ENCODE measurements at regions of chr19 and their contacts with region 1.

Region 1: DNA sequence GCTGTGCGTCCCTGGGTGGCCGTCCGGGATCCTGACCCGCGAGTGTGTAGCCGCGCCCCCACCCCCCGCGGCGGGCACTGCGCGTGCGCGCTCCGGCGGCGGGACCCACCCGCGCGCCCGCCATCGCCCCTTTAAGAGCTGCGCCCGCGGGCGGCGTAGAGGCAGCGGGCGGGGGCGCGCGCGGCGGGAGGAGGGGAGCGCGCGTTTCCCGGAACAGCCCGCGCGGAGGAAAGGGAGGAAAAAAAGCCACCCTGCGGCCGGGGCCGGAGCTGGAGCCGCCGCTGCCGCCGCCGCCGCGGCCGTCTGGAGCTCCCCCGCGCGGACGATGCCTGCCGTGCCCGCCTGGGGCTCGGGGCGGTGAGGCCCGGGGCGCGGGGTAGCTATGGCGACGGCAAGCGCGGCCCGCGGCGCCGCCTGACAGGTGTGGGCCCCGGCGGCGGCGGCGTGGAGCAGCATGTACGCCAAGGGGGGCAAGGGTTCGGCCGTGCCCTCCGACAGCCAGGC is at the start of gene SSBP4:
- DNase-seq: peak; percentile 53 to 89 (median 72)
- ATAC-seq: peak; percentile 59
- H3K4me3 ChIP-seq: peak within 1 kb of the TSS; percentile 61
- H3K4me3 Mint-ChIP-seq: peak within 1 kb of the TSS; percentile 80 to 92 (median 85)
- H3K27ac ChIP-seq: peak within 1 kb of the TSS; percentile 63
- H3K27ac Mint-ChIP-seq: peak within 1 kb of the TSS; percentile 40 to 90 (median 67)
- H3K4me1 ChIP-seq: peaks cover 68 to 76% of the 10 kb centered on the region in 2 donors
- H3K4me1 Mint-ChIP-seq: peaks cover 40 to 84% (median 79%) of the 10 kb centered on the region in 7 donors
- H3K27me3 ChIP-seq: peaks cover 0 to 14% of the 10 kb centered on the region in 2 donors
- H3K27me3 Mint-ChIP-seq: peaks cover 8 to 27% (median 15%) of the 10 kb centered on the region in 5 donors
- total RNA-seq, gene SSBP4: 27.0 to 185 (median 40.7) TPM

Region 2: DNA sequence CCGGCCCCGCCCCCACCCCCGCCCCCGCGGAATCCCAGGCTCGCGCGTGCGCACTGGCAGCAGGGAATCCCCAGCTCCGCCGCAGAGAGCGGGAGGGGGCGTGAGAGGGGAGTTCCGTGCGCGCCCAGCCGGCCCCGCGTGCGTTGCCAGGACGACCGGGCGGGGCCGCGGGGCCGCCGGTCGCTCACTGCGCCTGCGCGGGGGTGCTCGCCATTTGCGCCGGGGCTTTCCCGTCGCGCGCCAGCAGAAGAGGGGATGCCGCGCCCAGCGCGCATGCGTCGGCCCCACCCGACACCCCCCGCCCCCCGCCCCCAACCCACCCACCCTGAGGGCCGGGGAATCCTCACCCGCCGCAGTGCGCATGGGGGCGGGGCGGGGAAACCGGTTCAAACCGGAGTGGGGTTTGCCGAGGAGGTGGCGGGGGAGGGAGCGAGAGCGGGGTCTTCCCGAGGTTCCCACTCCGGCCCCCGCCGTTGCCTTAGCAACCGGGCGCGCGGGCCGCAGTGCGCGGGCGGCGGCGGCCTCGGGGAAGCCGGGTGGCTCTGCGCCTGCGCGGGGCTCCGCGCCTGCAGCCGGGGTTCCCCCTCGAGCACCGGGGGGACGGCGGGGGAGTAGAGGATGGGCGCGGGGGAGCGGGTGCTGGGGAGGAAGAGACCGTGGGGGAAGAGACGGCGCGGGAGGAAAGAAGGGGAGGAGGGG is 471.3 kb before region 1 on chr19:
- CTCF ChIA-PET with region 1: interaction called, 3 read pairs
- POLR2A ChIA-PET with region 1: no interaction called
- intact Hi-C with region 1: loop called in 1 of 2 experiments (anchors 10 kb)
- DNase-seq: peak; percentile 91 to 99 (median 95)
- ATAC-seq: peak; percentile 87
- H3K4me3 ChIP-seq: peak overlapping the region; percentile 41
- H3K4me3 Mint-ChIP-seq: peak overlapping the region; percentile 68 to 88 (median 82)
- H3K27ac ChIP-seq: peak overlapping the region; percentile 99
- H3K27ac Mint-ChIP-seq: peak overlapping the region in 7 of 9 donors; percentile 48 to 96 (median 87)
- H3K4me1 ChIP-seq: peaks cover 37 to 50% of the 10 kb centered on the region in 2 donors
- H3K4me1 Mint-ChIP-seq: peaks cover 22 to 55% (median 43%) of the 10 kb centered on the region in 7 donors
- H3K27me3 ChIP-seq: peaks cover 18 to 28% of the 10 kb centered on the region in 2 donors
- H3K27me3 Mint-ChIP-seq: peaks cover 27 to 43% (median 30%) of the 10 kb centered on the region in 5 donors

Region 3: DNA sequence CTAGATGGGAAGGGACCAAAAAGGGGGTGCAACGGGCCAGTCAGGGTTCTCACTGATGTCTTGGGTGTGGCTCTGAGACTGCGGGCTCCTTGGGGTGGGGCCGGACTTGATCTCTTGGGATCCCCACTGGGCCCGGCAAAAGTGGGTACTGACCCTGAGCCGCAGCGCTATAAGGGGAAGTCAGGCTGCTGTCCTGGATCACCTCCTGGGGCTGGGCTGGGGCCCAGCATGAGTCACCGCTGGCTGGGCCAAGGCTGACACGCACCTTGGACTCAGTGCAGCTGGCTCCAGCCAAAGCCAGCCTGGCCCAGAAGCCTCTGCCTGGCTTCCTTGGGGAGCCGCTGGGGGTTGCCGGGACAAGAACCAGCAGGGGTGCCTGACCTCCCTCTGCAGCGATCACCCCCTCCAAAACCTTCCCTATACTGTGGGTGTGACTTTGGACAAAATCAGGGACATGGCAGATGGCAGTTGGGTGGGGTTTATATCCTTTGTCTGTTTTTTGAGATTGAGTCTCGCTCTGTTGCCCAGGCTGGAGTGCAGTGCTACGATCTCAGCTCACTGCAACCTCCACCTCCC is 144.4 kb before region 1 on chr19:
- CTCF ChIA-PET with region 1: interaction called, 4 read pairs
- POLR2A ChIA-PET with region 1: no interaction called
- intact Hi-C with region 1: loop called (anchors 5 kb)
- DNase-seq: peak in 5 of 9 donors; percentile 34 to 57 (median 54)
- ATAC-seq: peak; percentile 29
- H3K4me3 ChIP-seq: no peak overlapping the region
- H3K4me3 Mint-ChIP-seq: peak overlapping the region in 8 of 10 donors; percentile 10 to 66 (median 56)
- H3K27ac ChIP-seq: no peak overlapping the region
- H3K27ac Mint-ChIP-seq: peak overlapping the region in 7 of 9 donors; percentile 43 to 87 (median 81)
- H3K4me1 ChIP-seq: peaks cover 13 to 46% of the 10 kb centered on the region in 2 donors
- H3K4me1 Mint-ChIP-seq: peaks cover 20 to 51% (median 35%) of the 10 kb centered on the region in 7 donors
- H3K27me3 ChIP-seq: no peaks in the 10 kb centered on the region
- H3K27me3 Mint-ChIP-seq: peaks cover 0 to 6% (median 0%) of the 10 kb centered on the region in 5 donors

Region 4: DNA sequence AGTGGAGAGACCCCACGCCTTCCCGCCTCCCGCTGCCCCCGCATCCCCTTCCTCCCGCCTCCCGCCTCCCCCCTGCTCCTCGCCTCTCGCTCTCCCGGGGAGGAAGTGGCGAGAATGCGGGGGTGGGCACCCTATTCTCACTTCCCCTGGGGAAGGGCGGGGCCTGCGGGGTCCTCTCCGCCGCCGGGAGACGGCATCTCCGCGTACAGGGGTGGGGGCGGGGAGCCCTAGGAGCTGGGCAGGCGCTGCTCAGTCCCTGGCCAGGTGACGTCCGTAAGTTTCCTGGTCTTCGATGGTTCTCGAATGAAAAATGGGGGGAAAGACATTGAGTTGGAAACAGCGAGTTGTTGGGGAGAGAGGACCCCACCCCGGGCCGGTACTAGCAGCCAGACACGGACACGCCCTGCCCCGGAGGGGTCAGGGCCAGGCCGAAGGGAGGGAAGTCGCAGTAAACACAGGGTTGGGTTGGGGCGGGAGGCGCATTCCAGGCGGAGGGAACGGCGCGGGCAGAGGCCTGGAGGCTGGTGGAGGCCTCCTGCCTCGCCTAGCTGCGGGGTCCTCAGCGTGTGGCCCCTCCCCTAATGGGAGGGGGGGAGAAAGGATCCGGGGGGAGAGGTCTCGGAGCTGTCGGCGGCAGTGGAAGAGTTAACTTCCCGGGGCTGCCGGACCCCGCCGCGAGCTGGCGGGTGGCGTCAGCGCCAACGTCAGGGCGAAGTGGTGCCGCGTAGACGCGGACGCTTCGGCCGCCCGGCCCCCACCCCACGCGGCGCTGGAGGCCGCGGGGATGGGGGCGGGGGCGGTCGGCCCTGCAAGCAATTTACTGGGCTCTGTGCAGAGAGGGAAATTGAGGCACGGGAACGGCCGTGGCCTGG is 127.4 kb before region 1 on chr19:
- CTCF ChIA-PET with region 1: no interaction called
- POLR2A ChIA-PET with region 1: no interaction called
- intact Hi-C with region 1: loop called in 1 of 2 experiments (anchors 5 kb)
- DNase-seq: peak in 8 of 9 donors; percentile 67 to 93 (median 70)
- ATAC-seq: peak; percentile 62
- H3K4me3 ChIP-seq: peak overlapping the region; percentile 84
- H3K4me3 Mint-ChIP-seq: peak overlapping the region; percentile 80 to 96 (median 92)
- H3K27ac ChIP-seq: peak overlapping the region; percentile 92
- H3K27ac Mint-ChIP-seq: peak overlapping the region; percentile 87 to 100 (median 97)
- H3K4me1 ChIP-seq: peaks cover 41 to 47% of the 10 kb centered on the region in 2 donors
- H3K4me1 Mint-ChIP-seq: peaks cover 38 to 73% (median 58%) of the 10 kb centered on the region in 7 donors
- H3K27me3 ChIP-seq: no peaks in the 10 kb centered on the region
- H3K27me3 Mint-ChIP-seq: no peaks in the 10 kb centered on the region

Region 5: GRCh38 chr19:18328340-18329034 is 90.8 kb before region 1 on chr19:
- CTCF ChIA-PET with region 1: no interaction called
- POLR2A ChIA-PET with region 1: no interaction called
- intact Hi-C with region 1: loop called (anchors 5 kb)
- DNase-seq: peak; percentile 55 to 92 (median 90)
- ATAC-seq: peak; percentile 99
- H3K4me3 ChIP-seq: peak overlapping the region; percentile 52
- H3K4me3 Mint-ChIP-seq: peak overlapping the region; percentile 62 to 87 (median 78)
- H3K27ac ChIP-seq: peak overlapping the region; percentile 45
- H3K27ac Mint-ChIP-seq: peak overlapping the region in 8 of 9 donors; percentile 38 to 75 (median 72)
- H3K4me1 ChIP-seq: peaks cover 12% of the 10 kb centered on the region in 2 donors
- H3K4me1 Mint-ChIP-seq: peaks cover 13 to 23% (median 20%) of the 10 kb centered on the region in 7 donors
- H3K27me3 ChIP-seq: no peaks in the 10 kb centered on the region
- H3K27me3 Mint-ChIP-seq: no peaks in the 10 kb centered on the region

Region 6: GRCh38 chr19:18388100-18388959 is 30.9 kb before region 1 on chr19:
- CTCF ChIA-PET with region 1: interaction called, 37 read pairs
- POLR2A ChIA-PET with region 1: interaction called, 4 read pairs
- intact Hi-C with region 1: no loop called
- DNase-seq: peak; percentile 38 to 86 (median 65)
- ATAC-seq: peak; percentile 90
- H3K4me3 ChIP-seq: peak overlapping the region; percentile 38
- H3K4me3 Mint-ChIP-seq: peak overlapping the region; percentile 62 to 83 (median 78)
- H3K27ac ChIP-seq: no peak overlapping the region
- H3K27ac Mint-ChIP-seq: peak overlapping the region in 1 of 9 donors; percentile 42
- H3K4me1 ChIP-seq: peaks cover 0 to 4% of the 10 kb centered on the region in 2 donors
- H3K4me1 Mint-ChIP-seq: peaks cover 0 to 12% (median 7%) of the 10 kb centered on the region in 7 donors
- H3K27me3 ChIP-seq: peaks cover 0 to 11% of the 10 kb centered on the region in 2 donors
- H3K27me3 Mint-ChIP-seq: peaks cover 19 to 73% (median 29%) of the 10 kb centered on the region in 5 donors

Region 7: DNA sequence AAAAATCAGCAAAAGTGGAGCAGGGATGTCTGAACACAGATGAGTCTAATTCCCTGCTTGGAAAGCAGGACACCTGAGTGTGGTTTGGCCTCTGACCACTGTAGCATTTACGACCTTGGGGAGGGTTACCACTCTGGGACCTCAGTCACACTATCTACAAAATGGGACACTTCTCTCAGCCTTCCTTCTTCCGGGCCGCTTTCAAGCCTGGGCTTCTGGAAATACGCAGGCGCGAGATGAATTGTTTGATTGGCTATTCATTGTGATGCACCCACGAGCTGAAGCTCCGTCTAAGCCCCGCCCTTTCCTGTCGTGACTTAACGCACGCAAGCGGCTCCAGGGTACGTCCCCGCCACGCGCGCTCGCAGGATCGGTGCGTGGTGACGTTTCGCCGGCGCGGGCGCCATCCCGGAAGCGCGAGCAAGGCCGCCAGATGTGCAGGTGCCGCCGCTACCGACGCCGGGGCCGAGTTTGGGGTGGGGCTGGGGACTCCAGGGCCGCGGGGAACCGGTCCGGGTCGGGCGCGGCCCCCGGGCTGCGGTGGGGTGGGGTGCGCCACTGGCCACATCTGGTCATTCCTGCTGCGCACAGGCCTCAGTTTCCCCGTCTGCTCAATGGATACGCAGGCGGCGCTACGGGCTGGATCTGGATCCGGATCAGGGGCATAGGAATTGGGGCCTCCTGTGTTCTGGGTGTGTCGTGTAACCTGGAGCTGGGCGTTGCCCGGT is 138.4 kb after region 1 on chr19 and contains the start of gene KXD1:
- CTCF ChIA-PET with region 1: no interaction called
- POLR2A ChIA-PET with region 1: no interaction called
- intact Hi-C with region 1: loop called in 1 of 2 experiments (anchors 1 kb)
- DNase-seq: peak; percentile 89 to 99 (median 97)
- ATAC-seq: peak; percentile 100
- H3K4me3 ChIP-seq: peak within 1 kb of the TSS; percentile 84
- H3K4me3 Mint-ChIP-seq: peak within 1 kb of the TSS; percentile 83 to 93 (median 91)
- H3K27ac ChIP-seq: peak within 1 kb of the TSS; percentile 95
- H3K27ac Mint-ChIP-seq: peak within 1 kb of the TSS; percentile 87 to 97 (median 96)
- H3K4me1 ChIP-seq: peaks cover 13 to 15% of the 10 kb centered on the region in 2 donors
- H3K4me1 Mint-ChIP-seq: peaks cover 6 to 25% (median 23%) of the 10 kb centered on the region in 7 donors
- H3K27me3 ChIP-seq: no peaks in the 10 kb centered on the region
- H3K27me3 Mint-ChIP-seq: no peaks in the 10 kb centered on the region
- total RNA-seq, gene KXD1: 74.7 to 108 (median 99.9) TPM

Region 8: GRCh38 chr19:18894254-18895037 is 475.2 kb after region 1 on chr19:
- CTCF ChIA-PET with region 1: no interaction called
- POLR2A ChIA-PET with region 1: no interaction called
- intact Hi-C with region 1: no loop called
- DNase-seq: no peak
- ATAC-seq: no peak
- H3K4me3 ChIP-seq: no peak overlapping the region
- H3K4me3 Mint-ChIP-seq: peak overlapping the region in 3 of 10 donors; percentile 5 to 45 (median 17)
- H3K27ac ChIP-seq: no peak overlapping the region
- H3K27ac Mint-ChIP-seq: no peak overlapping the region
- H3K4me1 ChIP-seq: no peaks in the 10 kb centered on the region
- H3K4me1 Mint-ChIP-seq: peaks cover 2 to 17% (median 11%) of the 10 kb centered on the region in 7 donors
- H3K27me3 ChIP-seq: no peaks in the 10 kb centered on the region
- H3K27me3 Mint-ChIP-seq: peaks cover 12 to 40% (median 32%) of the 10 kb centered on the region in 5 donors

Measured in naive thymus-derived CD4-positive, alpha-beta T cell (primary cell).